ENCODE measurements at regions of chr10 and their contacts with region 1.

Region 1: GRCh38 chr10:80158598-80159127 is 26.1 kb downstream of the PLAC9 start:
- DNase-seq: peak; percentile 64 to 92
- H3K4me3 ChIP-seq: no peak overlapping the region
- H3K27ac ChIP-seq: peak overlapping the region; percentile 45 to 87 (median 80)
- H3K4me1 ChIP-seq: peaks cover 50 to 93% (median 61%) of the 10 kb centered on the region in 4 donors
- H3K27me3 ChIP-seq: no peaks in the 10 kb centered on the region
- CTCF ChIP-seq: no peak
- EP300 ChIP-seq: no peak
- POLR2A ChIP-seq: no peak

Region 2: GRCh38 chr10:80015911-80016830 is 142.5 kb before region 1 on chr10:
- intact Hi-C with region 1: no loop called
- DNase-seq: no peak
- H3K4me3 ChIP-seq: no peak overlapping the region
- H3K27ac ChIP-seq: no peak overlapping the region
- H3K4me1 ChIP-seq: no peaks in the 10 kb centered on the region
- H3K27me3 ChIP-seq: no peaks in the 10 kb centered on the region
- CTCF ChIP-seq: no peak
- EP300 ChIP-seq: no peak
- POLR2A ChIP-seq: no peak

Region 3: GRCh38 chr10:80205478-80206276 is 47.0 kb after region 1 on chr10 and contains the start of gene ANXA11:
- intact Hi-C with region 1: loop called (anchors 5 kb)
- DNase-seq: peak; percentile 91 to 95
- H3K4me3 ChIP-seq: peak within 1 kb of the TSS; percentile 76 to 97 (median 81)
- H3K27ac ChIP-seq: peak within 1 kb of the TSS; percentile 99 to 100 (median 99)
- H3K4me1 ChIP-seq: peaks cover 60 to 83% (median 66%) of the 10 kb centered on the region in 4 donors
- H3K27me3 ChIP-seq: no peaks in the 10 kb centered on the region
- CTCF ChIP-seq: peak in 1 of 7 experiments; percentile 11
- EP300 ChIP-seq: no peak
- POLR2A ChIP-seq: peak in 2 of 4 donors; percentile 84 to 86
- total RNA-seq, gene ANXA11: 91.4 to 293 (median 109) TPM

Region 4: DNA sequence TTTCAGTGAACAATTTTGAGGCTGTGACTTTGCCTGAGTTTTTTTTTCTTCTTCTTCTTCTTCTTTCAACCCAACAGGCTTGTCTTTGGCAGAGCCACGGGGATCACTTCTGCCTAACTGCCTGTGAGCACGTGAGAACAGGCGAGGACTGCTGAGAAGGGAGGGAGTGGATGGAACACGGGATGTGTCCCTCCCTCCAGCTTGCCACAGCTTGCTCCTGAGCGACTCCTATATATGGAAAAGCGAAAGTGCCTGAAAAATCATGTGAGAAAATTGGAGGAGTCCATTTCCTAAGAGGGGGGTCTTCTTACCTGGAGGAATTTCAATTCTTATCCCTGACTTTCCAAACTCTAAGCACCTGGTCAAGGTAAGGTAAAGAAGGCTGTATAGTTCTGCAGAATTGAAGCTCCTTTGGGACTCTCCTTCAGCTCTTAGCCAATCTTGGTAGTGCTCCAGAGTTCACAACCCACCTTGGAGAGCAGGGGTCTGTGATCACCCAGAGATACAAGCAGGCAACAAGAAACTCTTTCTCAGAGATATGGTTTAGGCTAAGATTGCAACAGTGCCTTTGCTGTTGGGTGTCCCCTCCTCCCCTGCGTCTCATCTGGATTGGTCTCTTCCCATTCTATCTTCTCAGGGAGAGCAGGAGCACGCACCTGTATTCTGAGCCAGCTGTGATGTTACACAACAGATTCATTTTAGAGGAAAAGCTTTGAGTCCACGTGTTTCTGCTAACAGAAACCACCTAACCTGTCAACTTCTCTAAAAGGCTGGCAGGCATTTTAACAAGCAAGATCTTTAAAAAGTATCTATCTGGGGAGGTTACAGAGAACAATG is 131.0 kb after region 1 on chr10 and contains the start of gene MAT1A:
- intact Hi-C with region 1: no loop called
- DNase-seq: peak in 1 of 2 donors; percentile 42
- H3K4me3 ChIP-seq: peak within 1 kb of the TSS in 1 of 4 donors; percentile 2
- H3K27ac ChIP-seq: no peak within 1 kb of the TSS
- H3K4me1 ChIP-seq: peaks cover 0 to 3% (median 0%) of the 10 kb centered on the region in 4 donors
- H3K27me3 ChIP-seq: no peaks in the 10 kb centered on the region
- CTCF ChIP-seq: no peak
- EP300 ChIP-seq: no peak
- POLR2A ChIP-seq: no peak
- total RNA-seq, gene MAT1A: not detected